ENCODE measurements at regions of chr16 and their contacts with region 1.

Region 1: GRCh38 chr16:67428146-67428731 is 2.7 kb upstream of the HSD11B2 start:
- DNase-seq: peak; percentile 85 to 92
- H3K4me3 ChIP-seq: no peak overlapping the region
- H3K27ac ChIP-seq: peak overlapping the region in 3 of 5 donors; percentile 8 to 41 (median 22)
- H3K4me1 ChIP-seq: peaks cover 22 to 57% (median 43%) of the 10 kb centered on the region in 4 donors
- H3K27me3 ChIP-seq: peaks cover 0 to 68% (median 0%) of the 10 kb centered on the region in 3 donors
- CTCF ChIP-seq: peak in 5 of 7 experiments; percentile 74 to 94 (median 78)
- EP300 ChIP-seq: no peak
- POLR2A ChIP-seq: no peak

Region 2: DNA sequence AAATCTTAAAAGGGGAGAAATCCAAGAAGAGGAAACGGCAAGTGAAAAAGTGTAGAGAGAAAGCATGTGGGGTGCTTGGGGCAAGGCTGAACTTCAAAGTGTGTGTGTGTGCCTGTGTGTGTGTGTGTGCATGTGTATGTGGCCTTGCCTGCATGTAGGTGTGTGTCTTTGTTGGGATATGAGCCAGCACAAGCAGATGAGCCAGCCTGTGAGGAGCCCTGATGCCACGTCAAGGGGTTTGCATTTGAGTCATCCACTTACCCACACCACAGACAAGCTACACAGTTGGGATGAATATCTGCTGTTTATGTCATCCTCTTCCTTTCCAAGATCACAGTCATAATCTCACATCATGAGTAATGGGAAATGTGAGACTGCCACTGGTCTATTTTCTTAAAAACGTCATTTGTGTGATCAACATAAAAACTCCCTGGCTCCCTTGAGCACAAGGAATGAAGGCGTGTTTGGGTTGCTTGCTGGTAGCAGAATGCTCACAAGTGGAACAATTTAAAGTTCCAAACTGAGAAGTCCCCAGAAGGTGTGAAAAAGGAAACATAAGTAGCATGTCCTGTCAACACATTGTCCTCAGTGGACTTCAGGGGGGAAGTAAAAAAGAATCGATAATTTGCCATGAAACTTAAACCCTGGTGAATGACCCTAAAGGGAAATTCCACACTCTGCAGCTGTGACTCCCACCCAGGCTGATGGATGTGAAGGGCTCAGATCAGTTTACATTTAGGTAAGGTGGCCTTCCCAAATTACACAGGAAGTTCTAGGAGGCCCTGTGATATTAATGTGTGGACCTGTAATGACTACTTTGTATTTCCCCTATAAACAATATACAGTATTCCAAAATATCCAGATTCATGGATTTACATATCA is 116.4 kb before region 1 on chr16:
- intact Hi-C with region 1: no loop called
- DNase-seq: peak in 1 of 2 donors; percentile 55
- H3K4me3 ChIP-seq: no peak overlapping the region
- H3K27ac ChIP-seq: peak overlapping the region; percentile 18 to 70 (median 50)
- H3K4me1 ChIP-seq: peaks cover 0 to 4% (median 0%) of the 10 kb centered on the region in 4 donors
- H3K27me3 ChIP-seq: no peaks in the 10 kb centered on the region
- CTCF ChIP-seq: no peak
- EP300 ChIP-seq: no peak
- POLR2A ChIP-seq: no peak

Region 3: GRCh38 chr16:67468731-67469130 is 40.5 kb after region 1 on chr16:
- intact Hi-C with region 1: loop called (anchors 5 kb)
- DNase-seq: no peak
- H3K4me3 ChIP-seq: no peak overlapping the region
- H3K27ac ChIP-seq: no peak overlapping the region
- H3K4me1 ChIP-seq: peaks cover 29 to 85% (median 47%) of the 10 kb centered on the region in 4 donors
- H3K27me3 ChIP-seq: no peaks in the 10 kb centered on the region
- CTCF ChIP-seq: no peak
- EP300 ChIP-seq: no peak
- POLR2A ChIP-seq: no peak